ENCODE measurements at regions of chrX and their contacts with region 1.

Region 1: DNA sequence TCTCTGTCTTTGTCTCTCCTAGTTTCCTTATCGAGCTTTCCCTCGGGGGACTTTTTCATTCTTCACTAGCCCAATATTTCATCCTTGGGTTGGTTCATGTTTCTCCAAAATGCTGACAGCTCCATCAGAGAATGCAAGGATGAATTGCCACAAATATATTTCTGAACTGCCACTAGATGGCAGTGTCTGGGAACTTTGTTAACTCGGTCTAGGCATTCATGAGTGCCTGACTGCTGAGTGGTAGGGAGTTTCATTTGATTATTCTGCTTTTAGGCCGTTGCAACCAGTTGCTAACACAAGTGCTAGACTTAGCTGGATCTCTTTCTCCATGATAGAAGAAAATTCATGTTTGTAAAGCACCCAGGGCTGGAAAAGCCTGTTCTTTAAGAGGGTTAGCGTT is 73.5 kb upstream of the RAP2C start:
- DNase-seq: peak in 7 of 9 donors; percentile 9 to 53 (median 42)
- ATAC-seq: peak; percentile 63
- H3K4me3 ChIP-seq: no peak overlapping the region
- H3K4me3 Mint-ChIP-seq: no peak overlapping the region
- H3K27ac ChIP-seq: no peak overlapping the region
- H3K27ac Mint-ChIP-seq: no peak overlapping the region
- H3K4me1 ChIP-seq: no peaks in the 10 kb centered on the region
- H3K4me1 Mint-ChIP-seq: peaks cover 0 to 2% (median 0%) of the 10 kb centered on the region in 7 donors
- H3K27me3 ChIP-seq: no peaks in the 10 kb centered on the region
- H3K27me3 Mint-ChIP-seq: no peaks in the 10 kb centered on the region

Region 2: DNA sequence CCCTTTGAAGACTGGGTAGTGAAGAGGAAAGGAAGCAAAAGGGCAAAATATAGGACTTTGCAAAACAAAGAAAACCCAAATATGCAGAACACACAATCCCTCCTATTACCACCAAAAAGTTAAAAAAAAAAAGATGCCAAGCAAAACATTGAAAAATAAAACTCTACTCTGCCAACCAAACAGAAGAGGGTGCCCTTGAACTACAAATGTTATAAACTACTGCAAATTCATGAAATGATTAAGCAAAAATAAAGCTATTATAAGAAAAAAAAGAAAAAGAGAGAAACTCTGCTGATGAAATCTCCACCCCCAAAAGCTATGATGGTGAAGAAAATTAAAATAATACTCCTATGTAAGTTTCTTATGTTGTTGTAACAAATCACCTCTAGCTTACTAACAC is 438.2 kb before region 1 on chrX:
- CTCF ChIA-PET with region 1: no interaction called
- POLR2A ChIA-PET with region 1: no interaction called
- intact Hi-C with region 1: loop called (anchors 2 to 10 kb)
- DNase-seq: peak in 5 of 9 donors; percentile 25 to 48 (median 36)
- ATAC-seq: no peak
- H3K4me3 ChIP-seq: no peak overlapping the region
- H3K4me3 Mint-ChIP-seq: no peak overlapping the region
- H3K27ac ChIP-seq: no peak overlapping the region
- H3K27ac Mint-ChIP-seq: peak overlapping the region in 1 of 9 donors; percentile 70
- H3K4me1 ChIP-seq: no peaks in the 10 kb centered on the region
- H3K4me1 Mint-ChIP-seq: no peaks in the 10 kb centered on the region
- H3K27me3 ChIP-seq: no peaks in the 10 kb centered on the region
- H3K27me3 Mint-ChIP-seq: no peaks in the 10 kb centered on the region

Region 3: GRCh38 chrX:132226169-132226568 is 66.6 kb before region 1 on chrX:
- CTCF ChIA-PET with region 1: no interaction called
- POLR2A ChIA-PET with region 1: no interaction called
- intact Hi-C with region 1: loop called in 1 of 2 experiments (anchors 2 kb)
- DNase-seq: peak in 2 of 9 donors; percentile 11 to 12
- ATAC-seq: no peak
- H3K4me3 ChIP-seq: no peak overlapping the region
- H3K4me3 Mint-ChIP-seq: no peak overlapping the region
- H3K27ac ChIP-seq: no peak overlapping the region
- H3K27ac Mint-ChIP-seq: no peak overlapping the region
- H3K4me1 ChIP-seq: no peaks in the 10 kb centered on the region
- H3K4me1 Mint-ChIP-seq: peaks cover 5 to 11% (median 9%) of the 10 kb centered on the region in 7 donors
- H3K27me3 ChIP-seq: no peaks in the 10 kb centered on the region
- H3K27me3 Mint-ChIP-seq: no peaks in the 10 kb centered on the region

Region 4: DNA sequence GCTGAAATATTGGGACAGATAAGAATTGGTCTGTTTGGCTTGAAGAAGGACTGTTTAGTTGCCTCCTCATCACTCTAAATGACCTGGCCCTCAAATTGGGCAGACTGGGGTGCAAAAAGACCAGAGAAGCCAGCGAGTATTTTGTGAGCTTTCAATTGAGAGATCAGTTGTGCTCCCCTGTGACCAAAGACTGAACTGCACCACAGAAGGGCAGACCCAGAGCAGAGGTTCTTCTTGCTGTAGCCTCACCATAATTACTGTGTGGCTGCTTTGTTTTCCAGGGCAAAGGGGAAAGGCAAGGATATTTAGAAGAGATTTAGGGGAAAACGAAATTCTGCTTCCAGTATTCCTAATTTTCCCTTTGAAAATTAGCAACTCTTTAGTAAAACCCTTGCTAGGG is 300.1 kb after region 1 on chrX:
- CTCF ChIA-PET with region 1: interaction called, 9 read pairs
- POLR2A ChIA-PET with region 1: no interaction called
- intact Hi-C with region 1: loop called in 1 of 2 experiments (anchors 1 kb)
- DNase-seq: peak in 3 of 9 donors; percentile 2 to 13 (median 2)
- ATAC-seq: no peak
- H3K4me3 ChIP-seq: no peak overlapping the region
- H3K4me3 Mint-ChIP-seq: no peak overlapping the region
- H3K27ac ChIP-seq: no peak overlapping the region
- H3K27ac Mint-ChIP-seq: no peak overlapping the region
- H3K4me1 ChIP-seq: no peaks in the 10 kb centered on the region
- H3K4me1 Mint-ChIP-seq: no peaks in the 10 kb centered on the region
- H3K27me3 ChIP-seq: no peaks in the 10 kb centered on the region
- H3K27me3 Mint-ChIP-seq: peaks cover 0 to 3% (median 0%) of the 10 kb centered on the region in 5 donors

Region 5: GRCh38 chrX:132631579-132632232 is 338.9 kb after region 1 on chrX:
- CTCF ChIA-PET with region 1: interaction called, 5 read pairs
- POLR2A ChIA-PET with region 1: no interaction called
- intact Hi-C with region 1: loop called (anchors 1 to 5 kb)
- DNase-seq: peak in 7 of 9 donors; percentile 8 to 39 (median 27)
- ATAC-seq: peak; percentile 61
- H3K4me3 ChIP-seq: no peak overlapping the region
- H3K4me3 Mint-ChIP-seq: no peak overlapping the region
- H3K27ac ChIP-seq: no peak overlapping the region
- H3K27ac Mint-ChIP-seq: no peak overlapping the region
- H3K4me1 ChIP-seq: no peaks in the 10 kb centered on the region
- H3K4me1 Mint-ChIP-seq: peaks cover 0 to 1% (median 0%) of the 10 kb centered on the region in 7 donors
- H3K27me3 ChIP-seq: no peaks in the 10 kb centered on the region
- H3K27me3 Mint-ChIP-seq: no peaks in the 10 kb centered on the region